Cardiac septum (tissue), 1 donor: ENCODE measurements at regions of chr20 and their contacts with region 1.

Region 1: GRCh38 chr20:45341939-45342859 is 6.0 kb downstream of the SDC4 start:
- DNase-seq: peak; percentile 90

Region 2: GRCh38 chr20:45362804-45363610 is 20.8 kb after region 1 on chr20 and contains the start of gene SYS1:
- intact Hi-C with region 1: loop called (anchors 1 kb)
- DNase-seq: peak; percentile 99
- total RNA-seq, gene SYS1: 17.4 TPM